ENCODE measurements at regions of chr1 and their contacts with region 1.

Region 1: GRCh38 chr1:55284852-55285251 is 69.7 kb upstream of the USP24 start:
- DNase-seq: peak; percentile 26
- ATAC-seq: peak; percentile 76 to 80

Region 2: GRCh38 chr1:55337801-55338447 is 53.1 kb after region 1 on chr1:
- intact Hi-C with region 1: loop called in 1 of 2 experiments (anchors 5 kb)
- DNase-seq: no peak
- ATAC-seq: peak in 1 of 2 donors; percentile 24

Region 3: GRCh38 chr1:56821140-56821797 is 1536.4 kb after region 1 on chr1:
- intact Hi-C with region 1: loop called in 1 of 2 experiments (anchors 5 kb)
- DNase-seq: peak; percentile 85
- ATAC-seq: peak; percentile 83 to 84

Measured in left cardiac atrium (tissue), 4 donors.